Upper lobe of right lung (tissue), 1 donor: ENCODE measurements at regions of chr21 and their contacts with region 1.

Region 1: DNA sequence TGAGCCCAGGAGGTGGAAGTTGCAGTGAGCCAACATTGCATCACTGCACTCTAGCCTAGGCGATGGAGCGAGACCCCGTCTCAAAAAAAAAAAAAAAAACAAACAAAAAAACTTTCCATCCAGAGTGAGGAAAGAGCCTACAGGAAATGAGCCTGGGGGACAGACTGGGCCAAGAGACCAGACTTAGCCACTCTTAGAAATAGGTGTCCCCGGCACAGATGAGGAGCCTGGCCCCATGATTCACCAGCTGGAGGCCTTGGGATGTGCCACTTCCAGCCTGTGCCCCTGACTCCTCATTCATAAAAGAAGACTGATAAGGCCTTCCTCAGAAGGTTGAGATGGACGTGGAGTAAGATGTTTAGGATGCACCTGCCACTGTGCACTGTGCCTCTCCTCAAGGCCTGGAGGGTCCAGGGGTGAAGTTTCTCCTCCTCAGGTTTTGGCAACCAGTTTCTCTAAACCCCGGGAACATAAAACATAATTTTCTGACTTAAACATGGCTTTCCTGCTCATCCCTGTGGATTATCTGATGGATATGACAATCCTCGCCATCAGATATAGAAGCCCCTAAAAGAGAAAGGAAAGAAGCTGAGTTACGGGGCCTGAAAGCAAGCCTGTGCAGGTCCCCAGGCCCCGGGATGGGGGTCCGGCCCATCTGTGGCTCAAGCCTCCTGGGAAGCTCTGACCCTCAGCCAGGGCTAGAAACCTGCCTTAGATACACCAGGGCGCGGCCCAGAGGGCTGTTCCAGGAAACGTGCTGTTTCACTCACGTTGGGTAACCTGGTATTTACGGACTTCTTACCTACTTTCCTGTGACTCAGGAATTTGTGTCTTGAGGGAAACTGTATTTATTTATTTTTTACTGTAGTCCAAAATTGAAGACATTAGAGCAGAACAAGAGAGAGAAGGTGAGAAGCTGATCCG is 26.0 kb downstream of the MX1 start:
- DNase-seq: no peak
- ATAC-seq: peak; percentile 33
- H3K4me3 ChIP-seq: no peak overlapping the region
- H3K27ac ChIP-seq: no peak overlapping the region
- H3K4me1 ChIP-seq: no peaks in the 10 kb centered on the region
- H3K27me3 ChIP-seq: no peaks in the 10 kb centered on the region
- CTCF ChIP-seq: no peak

Region 2: DNA sequence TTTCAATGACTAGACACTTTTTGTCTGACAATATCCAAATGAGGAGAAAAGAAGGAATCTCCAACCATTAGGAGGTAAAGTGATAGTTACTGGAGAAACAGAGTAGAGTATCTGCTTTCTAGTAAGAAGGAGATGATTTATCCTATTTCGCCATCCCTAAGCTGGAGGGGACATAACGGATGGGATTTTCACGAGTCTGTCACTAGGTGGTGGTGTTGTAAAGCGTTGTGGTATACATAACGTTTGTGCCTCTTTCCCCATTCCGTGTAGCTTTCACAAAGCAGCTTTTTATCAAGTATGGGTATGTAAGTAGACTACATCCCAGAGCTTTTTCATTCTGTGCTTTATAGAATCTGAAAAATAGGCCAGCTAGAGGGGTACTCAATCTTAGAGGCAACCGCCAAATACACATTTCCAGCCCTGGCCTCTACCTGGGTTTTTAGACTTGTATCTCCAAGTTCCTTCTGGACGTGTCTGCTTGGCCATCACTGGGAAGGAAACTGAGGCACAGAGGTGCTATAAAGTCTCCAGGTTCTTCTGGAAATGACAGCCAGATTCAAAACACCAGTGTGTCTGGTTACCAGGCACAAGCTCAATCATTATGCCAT is 168.7 kb before region 1 on chr21:
- intact Hi-C with region 1: loop called (anchors 5 kb)
- DNase-seq: no peak
- ATAC-seq: peak; percentile 98
- H3K4me3 ChIP-seq: no peak overlapping the region
- H3K27ac ChIP-seq: no peak overlapping the region
- H3K4me1 ChIP-seq: no peaks in the 10 kb centered on the region
- H3K27me3 ChIP-seq: no peaks in the 10 kb centered on the region
- CTCF ChIP-seq: peak; percentile 77

Region 3: GRCh38 chr21:41641821-41642701 is 190.0 kb after region 1 on chr21:
- intact Hi-C with region 1: no loop called
- DNase-seq: peak; percentile 36
- ATAC-seq: no peak
- H3K4me3 ChIP-seq: no peak overlapping the region
- H3K27ac ChIP-seq: peak overlapping the region; percentile 45
- H3K4me1 ChIP-seq: peaks cover 10% of the 10 kb centered on the region
- H3K27me3 ChIP-seq: no peaks in the 10 kb centered on the region
- CTCF ChIP-seq: no peak